Body of pancreas (tissue), 4 donors: ENCODE measurements at regions of chr2 and their contacts with region 1.

Region 1: GRCh38 chr2:79219383-79219988 is 59.9 kb upstream of the REG3A start:
- DNase-seq: peak; percentile 72 to 80 (median 75)
- ATAC-seq: peak; percentile 66
- H3K4me3 ChIP-seq: no peak overlapping the region
- H3K27ac ChIP-seq: peak overlapping the region in 1 of 4 donors; percentile 26
- H3K4me1 ChIP-seq: no peaks in the 10 kb centered on the region
- H3K27me3 ChIP-seq: no peaks in the 10 kb centered on the region
- CTCF ChIP-seq: peak; percentile 61 to 91 (median 85)
- POLR2A ChIP-seq: no peak

Region 2: DNA sequence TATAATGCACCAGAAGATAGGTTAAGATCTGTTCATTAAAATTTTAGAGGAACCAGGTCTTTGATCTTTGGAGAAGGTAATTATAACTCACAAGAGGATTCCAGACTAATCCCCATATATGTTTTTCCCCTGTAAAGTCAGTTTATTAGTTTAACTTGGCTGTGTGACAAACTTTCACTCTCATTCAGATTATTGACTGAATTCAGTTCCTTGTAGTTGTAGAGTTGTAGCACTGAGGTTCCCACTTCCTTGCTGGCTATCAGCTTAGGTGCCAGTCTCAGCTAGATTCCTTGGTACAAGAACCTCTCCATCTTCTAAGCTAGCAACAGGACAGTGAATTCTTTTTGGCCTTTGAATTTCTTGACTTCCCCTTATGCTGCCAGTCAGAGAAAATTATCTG is 80.1 kb before region 1 on chr2:
- intact Hi-C with region 1: loop called (anchors 5 kb)
- DNase-seq: no peak
- ATAC-seq: peak; percentile 47
- H3K4me3 ChIP-seq: no peak overlapping the region
- H3K27ac ChIP-seq: no peak overlapping the region
- H3K4me1 ChIP-seq: peaks cover 50% of the 10 kb centered on the region
- H3K27me3 ChIP-seq: no peaks in the 10 kb centered on the region
- CTCF ChIP-seq: no peak
- POLR2A ChIP-seq: no peak

Region 3: GRCh38 chr2:79373359-79374115 is 154.1 kb after region 1 on chr2:
- intact Hi-C with region 1: no loop called
- DNase-seq: no peak
- ATAC-seq: no peak
- H3K4me3 ChIP-seq: no peak overlapping the region
- H3K27ac ChIP-seq: no peak overlapping the region
- H3K4me1 ChIP-seq: no peaks in the 10 kb centered on the region
- H3K27me3 ChIP-seq: no peaks in the 10 kb centered on the region
- CTCF ChIP-seq: no peak
- POLR2A ChIP-seq: no peak

Region 4: GRCh38 chr2:79876430-79876829 is 656.9 kb after region 1 on chr2:
- intact Hi-C with region 1: loop called (anchors 10 kb)
- DNase-seq: peak; percentile 23 to 41 (median 26)
- ATAC-seq: no peak
- H3K4me3 ChIP-seq: no peak overlapping the region
- H3K27ac ChIP-seq: no peak overlapping the region
- H3K4me1 ChIP-seq: no peaks in the 10 kb centered on the region
- H3K27me3 ChIP-seq: no peaks in the 10 kb centered on the region
- CTCF ChIP-seq: peak in 4 of 7 experiments; percentile 21 to 40 (median 28)
- POLR2A ChIP-seq: no peak